WTC11 (cell line): ENCODE measurements at regions of chr3 and their contacts with region 1.

Region 1: GRCh38 chr3:154615471-154615870 is 185.5 kb upstream of the GPR149 start:
- DNase-seq: no peak
- ATAC-seq: no peak
- H3K4me3 Mint-ChIP-seq: no peak overlapping the region
- H3K27ac Mint-ChIP-seq: no peak overlapping the region
- H3K4me1 Mint-ChIP-seq: no peaks in the 10 kb centered on the region
- H3K27me3 Mint-ChIP-seq: no peaks in the 10 kb centered on the region
- CTCF ChIP-seq: no peak

Region 2: GRCh38 chr3:154552338-154552737 is 63.1 kb before region 1 on chr3:
- CTCF ChIA-PET with region 1: interaction called, 13 read pairs
- POLR2A ChIA-PET with region 1: no interaction called
- DNase-seq: no peak
- ATAC-seq: peak; percentile 96
- H3K4me3 Mint-ChIP-seq: no peak overlapping the region
- H3K27ac Mint-ChIP-seq: no peak overlapping the region
- H3K4me1 Mint-ChIP-seq: no peaks in the 10 kb centered on the region
- H3K27me3 Mint-ChIP-seq: no peaks in the 10 kb centered on the region
- CTCF ChIP-seq: no peak

Region 3: DNA sequence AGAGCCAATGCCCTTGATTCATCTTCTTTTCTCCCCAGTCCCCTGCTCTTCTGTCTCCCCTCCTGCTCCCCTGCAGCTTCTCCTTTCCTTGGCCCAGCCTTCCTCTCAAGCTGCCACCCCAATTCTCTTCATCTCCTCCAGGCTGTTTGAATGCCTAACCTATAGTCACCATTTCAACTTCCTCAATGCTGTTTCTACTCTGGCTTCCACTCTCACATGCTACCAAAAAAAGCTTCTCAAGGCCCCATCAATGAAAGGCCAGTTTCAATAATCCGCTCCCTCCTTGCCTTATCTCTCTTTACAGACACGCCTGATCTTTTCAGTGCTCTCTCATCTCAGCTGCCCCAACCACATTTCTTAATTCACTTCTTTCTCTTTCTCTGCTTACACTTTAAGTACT is 26.7 kb after region 1 on chr3:
- CTCF ChIA-PET with region 1: no interaction called
- POLR2A ChIA-PET with region 1: no interaction called
- DNase-seq: no peak
- ATAC-seq: no peak
- H3K4me3 Mint-ChIP-seq: no peak overlapping the region
- H3K27ac Mint-ChIP-seq: no peak overlapping the region
- H3K4me1 Mint-ChIP-seq: 0 out of 2 replicates have a peak, but pooled peaks cover 2% of the 10 kb centered on the region
- H3K27me3 Mint-ChIP-seq: no peaks in the 10 kb centered on the region
- CTCF ChIP-seq: no peak

Region 4: GRCh38 chr3:154678041-154678638 is 62.7 kb after region 1 on chr3:
- CTCF ChIA-PET with region 1: no interaction called
- POLR2A ChIA-PET with region 1: no interaction called
- DNase-seq: no peak
- ATAC-seq: no peak
- H3K4me3 Mint-ChIP-seq: no peak overlapping the region
- H3K27ac Mint-ChIP-seq: no peak overlapping the region
- H3K4me1 Mint-ChIP-seq: no peaks in the 10 kb centered on the region
- H3K27me3 Mint-ChIP-seq: no peaks in the 10 kb centered on the region
- CTCF ChIP-seq: no peak